Breast epithelium (tissue), 4 donors: ENCODE measurements at regions of chr12 and their contacts with region 1.

Region 1: GRCh38 chr12:83841620-83842019 is 1071.0 kb downstream of the SLC6A15 start:
- DNase-seq: no peak
- H3K4me3 ChIP-seq: no peak overlapping the region
- H3K27ac ChIP-seq: no peak overlapping the region
- H3K4me1 ChIP-seq: no peaks in the 10 kb centered on the region
- H3K27me3 ChIP-seq: no peaks in the 10 kb centered on the region
- CTCF ChIP-seq: no peak
- POLR2A ChIP-seq: no peak

Region 2: DNA sequence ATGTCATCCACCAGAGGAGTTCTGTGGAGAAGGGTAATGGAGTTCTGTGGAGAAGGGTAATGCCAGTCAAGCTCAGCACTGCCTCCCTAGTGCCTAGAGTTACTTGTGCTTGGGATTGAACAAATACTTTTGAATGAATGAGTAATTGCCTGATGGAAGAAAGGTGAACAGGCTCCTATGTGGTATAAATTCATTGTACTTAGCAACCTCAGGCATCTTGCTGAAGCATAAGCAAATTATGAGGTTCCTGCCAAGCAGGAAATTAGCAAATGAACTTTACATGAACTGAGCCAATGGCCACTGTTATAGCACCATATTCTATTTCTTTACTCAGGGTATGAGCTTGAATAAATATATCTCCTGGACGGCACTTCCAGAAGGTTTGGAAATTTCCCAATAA is 23.8 kb after region 1 on chr12:
- intact Hi-C with region 1: no loop called
- DNase-seq: no peak
- H3K4me3 ChIP-seq: no peak overlapping the region
- H3K27ac ChIP-seq: no peak overlapping the region
- H3K4me1 ChIP-seq: no peaks in the 10 kb centered on the region
- H3K27me3 ChIP-seq: no peaks in the 10 kb centered on the region
- CTCF ChIP-seq: no peak
- POLR2A ChIP-seq: no peak

Region 3: GRCh38 chr12:83889745-83890144 is 48.1 kb after region 1 on chr12:
- intact Hi-C with region 1: loop called (anchors 2 kb)
- DNase-seq: no peak
- H3K4me3 ChIP-seq: no peak overlapping the region
- H3K27ac ChIP-seq: no peak overlapping the region
- H3K4me1 ChIP-seq: no peaks in the 10 kb centered on the region
- H3K27me3 ChIP-seq: no peaks in the 10 kb centered on the region
- CTCF ChIP-seq: no peak
- POLR2A ChIP-seq: no peak